ENCODE measurements at regions of chr14 and their contacts with region 1.

Region 1: DNA sequence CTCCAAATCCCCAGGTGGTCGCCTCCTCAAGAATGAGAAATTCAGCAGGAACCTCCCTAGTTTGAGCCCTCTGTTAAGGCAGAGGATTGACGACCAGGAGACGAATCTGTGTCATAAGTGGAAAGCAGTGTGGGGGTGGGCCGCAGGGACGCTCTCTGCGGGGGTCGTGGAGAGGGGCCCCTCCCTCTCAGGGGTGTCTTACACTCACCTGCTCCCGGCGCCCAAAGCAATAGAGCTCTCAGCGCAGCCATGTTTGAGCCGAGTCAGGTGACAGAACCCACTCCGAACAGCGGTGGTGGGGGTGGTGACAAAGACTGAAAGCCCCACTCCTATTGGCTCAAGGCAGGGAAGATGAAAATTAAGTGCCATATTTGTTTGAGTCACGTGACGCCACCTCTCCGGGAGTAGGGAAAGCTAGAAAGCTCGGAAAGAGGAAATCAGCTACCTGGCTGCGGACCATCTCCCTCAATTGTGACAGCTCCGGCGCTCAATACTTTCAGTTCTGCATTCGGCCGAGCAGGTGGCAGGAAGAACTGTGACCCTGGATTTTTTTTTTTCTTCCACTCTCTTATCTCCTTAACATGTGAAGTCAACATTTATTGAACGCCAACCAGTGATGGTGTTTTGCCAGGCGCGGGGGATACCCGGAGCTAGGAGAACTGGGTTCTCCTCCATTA is at the start of gene ZFYVE26:
- DNase-seq: peak; percentile 85 to 98 (median 95)
- H3K4me3 ChIP-seq: peak within 1 kb of the TSS; percentile 61 to 99 (median 84)
- H3K27ac ChIP-seq: peak within 1 kb of the TSS; percentile 38 to 95 (median 86)
- H3K27me3 ChIP-seq: no peaks in the 10 kb centered on the region
- CTCF ChIP-seq: peak in 16 of 56 donors; percentile 3 to 47 (median 18)
- total RNA-seq, gene ZFYVE26: 17.7 to 41.8 (median 28.0) TPM

Region 2: DNA sequence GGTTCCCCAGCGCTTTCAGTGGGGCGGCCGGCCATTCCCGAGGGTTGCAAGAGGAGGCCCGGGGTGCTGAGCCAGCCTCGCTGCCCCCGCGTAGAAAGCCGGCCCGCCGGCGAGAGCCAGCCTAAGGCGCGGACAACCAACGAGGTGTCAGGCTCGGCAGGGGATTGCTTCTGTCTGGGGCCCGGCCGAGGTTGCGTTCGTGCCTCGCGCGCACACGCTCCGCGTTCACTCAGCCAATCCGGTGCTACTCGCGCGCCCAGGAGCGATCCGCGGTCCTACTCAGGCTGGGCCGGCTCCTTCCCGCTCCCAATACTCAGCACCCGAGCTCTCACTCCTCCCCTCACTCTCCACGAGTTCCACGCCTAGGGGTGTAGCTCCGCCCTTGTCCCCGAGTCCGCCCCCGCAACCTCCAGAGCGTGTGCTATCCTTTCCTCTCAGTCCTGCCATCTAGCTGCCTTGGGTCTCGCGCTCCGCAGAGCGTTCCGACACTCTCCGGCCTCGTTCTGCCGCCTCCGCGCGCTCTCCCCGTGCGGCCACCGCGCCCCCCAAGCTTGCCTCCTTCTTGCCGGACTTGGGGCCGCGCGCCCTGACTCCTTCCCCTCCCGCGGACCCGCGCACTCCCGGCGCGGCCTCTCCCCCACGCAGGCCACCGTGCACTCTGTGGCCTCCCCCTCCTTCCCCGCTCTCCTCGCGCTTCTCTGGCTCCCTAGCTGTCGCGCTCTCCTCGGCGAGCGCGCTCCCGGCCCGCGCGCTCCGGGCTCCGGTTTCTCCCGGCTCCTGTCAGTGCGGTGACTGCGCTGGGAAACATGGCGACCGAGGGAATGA is 1308.5 kb before region 1 on chr14 and contains the start of gene GPHN:
- intact Hi-C with region 1: loop called in 1 of 2 experiments (anchors 10 kb)
- DNase-seq: peak; percentile 90 to 97 (median 96)
- H3K4me3 ChIP-seq: peak within 1 kb of the TSS; percentile 63 to 99 (median 91)
- H3K27ac ChIP-seq: peak within 1 kb of the TSS; percentile 84 to 99 (median 95)
- H3K27me3 ChIP-seq: no peaks in the 10 kb centered on the region
- CTCF ChIP-seq: peak; percentile 23 to 82 (median 58)
- total RNA-seq, gene GPHN: 61.8 to 136 (median 95.7) TPM

Region 3: DNA sequence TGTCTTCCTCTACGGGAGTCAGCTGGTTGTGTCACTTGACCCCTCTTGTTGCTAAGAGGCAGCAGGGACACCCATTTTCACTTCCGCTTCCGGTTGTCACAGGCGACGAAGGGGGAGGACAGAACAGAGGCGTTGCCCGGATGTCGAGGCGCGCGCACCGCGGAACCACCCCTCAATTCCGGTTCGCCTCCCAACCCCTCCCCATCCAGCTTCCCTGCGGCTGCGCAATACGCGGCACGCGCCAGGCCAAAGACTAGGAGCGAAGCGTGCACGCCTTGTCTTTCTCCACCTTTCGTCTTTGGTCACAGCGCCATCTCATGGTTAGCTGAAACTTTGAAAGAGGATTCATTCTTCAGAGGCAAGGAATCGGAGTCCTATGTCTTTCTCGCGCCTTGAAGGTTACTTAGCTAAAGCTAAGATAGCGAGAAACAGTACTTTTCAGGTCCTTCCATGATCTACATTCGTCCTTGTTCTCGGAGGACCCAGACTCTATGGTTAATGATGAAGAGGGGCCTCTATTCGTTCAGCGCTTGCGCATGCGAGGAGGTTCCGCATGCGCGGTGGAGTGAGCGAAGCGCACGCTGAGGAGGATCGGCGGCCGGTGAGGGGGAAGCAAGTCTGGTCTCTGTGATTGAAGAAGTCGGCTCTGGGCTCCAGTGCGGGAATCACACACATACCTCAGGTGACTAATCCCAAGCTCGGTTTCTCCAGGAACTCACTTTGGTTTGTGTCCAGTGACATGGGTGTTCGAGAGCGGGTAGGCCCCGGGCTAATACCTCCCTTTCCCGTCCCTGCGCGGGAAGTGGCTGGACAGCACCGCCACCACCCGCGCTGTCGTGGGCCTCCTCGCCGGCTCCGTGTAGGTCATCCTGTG is 456.5 kb before region 1 on chr14 and contains the starts of genes ATP6V1D and EIF2S1:
- intact Hi-C with region 1: loop called (anchors 5 kb)
- DNase-seq: peak; percentile 98 to 100 (median 99)
- H3K4me3 ChIP-seq: peak within 1 kb of the TSS; percentile 67 to 100 (median 94)
- H3K27ac ChIP-seq: peak within 1 kb of the TSS; percentile 91 to 100 (median 99)
- H3K27me3 ChIP-seq: no peaks in the 10 kb centered on the region
- CTCF ChIP-seq: peak; percentile 91 to 100 (median 99)
- total RNA-seq, gene ATP6V1D: 54.1 to 244 (median 150) TPM
- total RNA-seq, gene EIF2S1: 31.2 to 84.1 (median 59.5) TPM

Region 4: DNA sequence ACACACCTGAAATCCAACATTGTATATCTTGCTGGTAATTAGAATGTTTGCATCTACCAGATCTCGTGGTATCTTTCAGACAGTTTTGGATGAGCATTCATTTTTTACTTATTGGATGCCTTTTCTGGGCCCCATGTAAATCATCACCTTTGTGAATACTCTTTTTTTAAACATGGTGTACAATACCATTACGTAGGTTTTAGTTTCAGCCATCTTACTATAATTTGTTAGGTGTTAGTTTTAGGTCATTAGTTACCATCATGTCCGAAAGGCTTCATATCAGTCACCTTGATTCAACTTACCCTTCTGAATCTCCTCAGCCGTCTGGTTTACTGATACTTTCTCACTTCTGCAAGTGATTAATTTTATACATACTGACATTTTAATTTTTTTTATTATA is 451.0 kb before region 1 on chr14:
- intact Hi-C with region 1: loop called (anchors 5 kb)
- DNase-seq: no peak
- H3K4me3 ChIP-seq: no peak overlapping the region
- H3K27ac ChIP-seq: no peak overlapping the region
- H3K27me3 ChIP-seq: no peaks in the 10 kb centered on the region
- CTCF ChIP-seq: no peak

Region 5: DNA sequence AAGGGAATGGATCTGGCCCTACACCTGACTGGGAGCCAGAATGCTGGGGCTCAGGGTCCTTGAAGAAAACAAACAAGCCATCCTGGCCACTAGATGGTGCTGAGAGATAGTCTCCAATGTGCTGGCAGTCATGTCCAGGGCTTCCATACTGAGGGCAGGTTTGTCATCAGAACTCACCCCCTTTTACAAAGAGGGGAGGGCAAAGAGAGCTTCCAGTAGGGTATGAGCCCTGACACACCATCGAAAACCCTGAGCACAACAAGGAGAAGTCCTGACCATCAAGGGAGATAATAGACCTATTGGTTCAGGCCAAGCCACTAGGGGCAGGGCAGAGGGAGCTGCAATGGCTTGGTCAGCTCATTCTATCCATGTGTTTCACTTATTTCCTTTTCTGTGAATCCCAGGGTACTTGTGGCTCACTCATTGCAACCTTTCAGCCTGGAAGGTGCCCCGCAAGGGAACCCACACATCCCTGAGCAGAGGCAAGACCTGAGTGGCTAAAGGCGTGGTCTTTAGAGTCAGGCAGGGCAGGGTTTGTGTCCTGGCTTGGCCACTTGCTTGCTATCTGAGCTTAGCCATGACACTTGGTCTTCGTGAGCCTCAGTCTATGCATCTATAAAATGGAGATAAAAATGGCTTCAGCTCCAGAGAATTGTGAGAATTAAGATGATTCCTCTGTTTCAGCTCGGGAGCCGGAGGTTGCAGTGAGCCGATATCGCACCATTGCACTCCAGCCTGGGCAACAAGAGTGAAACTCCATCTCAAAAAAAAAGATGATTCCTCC is 289.6 kb before region 1 on chr14:
- intact Hi-C with region 1: loop called in 1 of 2 experiments (anchors 10 kb)
- DNase-seq: peak in 7 of 10 donors; percentile 44 to 73 (median 56)
- H3K4me3 ChIP-seq: no peak overlapping the region
- H3K27ac ChIP-seq: peak overlapping the region in 55 of 59 donors; percentile 6 to 100 (median 77)
- H3K27me3 ChIP-seq: no peaks in the 10 kb centered on the region
- CTCF ChIP-seq: peak; percentile 55 to 96 (median 83)

Region 6: GRCh38 chr14:67674481-67675169 is 141.8 kb before region 1 on chr14 and contains the start of gene VTI1B:
- intact Hi-C with region 1: no loop called
- DNase-seq: peak; percentile 57 to 87 (median 76)
- H3K4me3 ChIP-seq: peak within 1 kb of the TSS; percentile 78 to 100 (median 94)
- H3K27ac ChIP-seq: peak within 1 kb of the TSS; percentile 93 to 100 (median 99)
- H3K27me3 ChIP-seq: no peaks in the 10 kb centered on the region
- CTCF ChIP-seq: peak in 30 of 56 donors; percentile 1 to 51 (median 19)
- total RNA-seq, gene VTI1B: 101 to 177 (median 140) TPM

Region 7: DNA sequence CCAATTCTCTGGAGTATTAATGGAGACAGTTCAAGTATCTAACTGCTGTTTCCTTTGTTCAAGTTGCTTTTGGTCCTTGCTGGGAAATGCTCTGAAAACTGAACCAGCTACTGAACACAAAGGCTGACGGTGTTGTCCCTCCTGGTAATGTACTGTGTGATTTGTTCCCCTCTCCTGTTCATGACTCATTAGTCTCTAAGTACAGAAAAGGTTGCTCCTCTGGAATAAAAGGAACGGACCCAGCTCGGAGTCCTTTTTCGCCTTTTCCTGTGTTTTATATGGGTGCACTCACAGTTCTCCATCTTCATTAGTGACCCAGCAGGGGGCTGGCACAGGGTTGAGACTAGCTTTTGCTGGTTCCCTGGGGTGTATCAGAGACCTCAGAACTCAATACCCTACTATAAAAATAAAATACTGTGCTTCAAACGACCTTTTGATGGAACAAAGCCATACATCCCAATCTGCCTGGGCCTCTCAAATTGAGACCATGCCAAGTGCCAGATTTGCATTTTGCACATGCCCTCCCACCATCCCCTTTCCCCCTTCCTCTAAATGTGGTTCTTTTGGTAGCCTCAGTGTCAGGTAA is 272.8 kb after region 1 on chr14:
- intact Hi-C with region 1: no loop called
- DNase-seq: no peak
- H3K4me3 ChIP-seq: peak overlapping the region in 1 of 59 donors; percentile 28
- H3K27ac ChIP-seq: peak overlapping the region in 11 of 59 donors; percentile 0 to 71 (median 27)
- H3K27me3 ChIP-seq: no peaks in the 10 kb centered on the region
- CTCF ChIP-seq: no peak